ENCODE measurements at regions of chr1 and their contacts with region 1.

Region 1: GRCh38 chr1:193609592-193609991 is 423.2 kb upstream of the B3GALT2 start:
- DNase-seq: no peak
- H3K4me3 Mint-ChIP-seq: no peak overlapping the region
- H3K27ac Mint-ChIP-seq: no peak overlapping the region
- H3K4me1 Mint-ChIP-seq: peaks cover 33% of the 10 kb centered on the region
- H3K27me3 Mint-ChIP-seq: no peaks in the 10 kb centered on the region

Region 2: DNA sequence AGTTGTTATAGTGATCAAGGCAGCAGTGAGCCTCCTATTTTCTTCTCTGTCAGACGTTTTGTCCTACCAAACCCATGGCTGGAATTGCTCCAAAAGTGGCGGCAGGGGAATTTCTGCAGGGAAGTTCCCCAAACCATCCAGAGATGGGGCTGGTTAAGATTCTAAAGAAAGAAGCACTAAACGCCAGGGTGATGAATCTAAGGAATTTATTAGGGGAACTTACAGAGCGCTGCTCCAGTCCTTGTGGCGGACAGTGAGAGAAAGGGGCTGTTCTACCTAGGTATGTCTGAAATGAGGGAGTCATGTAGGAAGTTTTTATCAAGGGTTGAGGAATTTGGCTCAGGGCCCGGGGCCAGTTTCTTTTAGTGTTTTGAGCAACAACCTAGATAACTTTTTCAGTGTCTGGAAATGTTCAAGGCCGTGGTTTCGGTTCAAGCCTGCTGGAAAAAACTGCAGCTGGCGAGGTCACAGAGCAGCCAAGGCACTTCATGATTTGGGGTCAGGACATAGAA is 200.8 kb before region 1 on chr1:
- intact Hi-C with region 1: loop called (anchors 5 kb)
- DNase-seq: no peak
- H3K4me3 Mint-ChIP-seq: no peak overlapping the region
- H3K27ac Mint-ChIP-seq: no peak overlapping the region
- H3K4me1 Mint-ChIP-seq: peaks cover 36% of the 10 kb centered on the region
- H3K27me3 Mint-ChIP-seq: no peaks in the 10 kb centered on the region

Region 3: GRCh38 chr1:193456811-193457280 is 152.7 kb before region 1 on chr1:
- intact Hi-C with region 1: loop called (anchors 10 kb)
- DNase-seq: no peak
- H3K4me3 Mint-ChIP-seq: no peak overlapping the region
- H3K27ac Mint-ChIP-seq: no peak overlapping the region
- H3K4me1 Mint-ChIP-seq: peaks cover 25% of the 10 kb centered on the region
- H3K27me3 Mint-ChIP-seq: no peaks in the 10 kb centered on the region

Region 4: DNA sequence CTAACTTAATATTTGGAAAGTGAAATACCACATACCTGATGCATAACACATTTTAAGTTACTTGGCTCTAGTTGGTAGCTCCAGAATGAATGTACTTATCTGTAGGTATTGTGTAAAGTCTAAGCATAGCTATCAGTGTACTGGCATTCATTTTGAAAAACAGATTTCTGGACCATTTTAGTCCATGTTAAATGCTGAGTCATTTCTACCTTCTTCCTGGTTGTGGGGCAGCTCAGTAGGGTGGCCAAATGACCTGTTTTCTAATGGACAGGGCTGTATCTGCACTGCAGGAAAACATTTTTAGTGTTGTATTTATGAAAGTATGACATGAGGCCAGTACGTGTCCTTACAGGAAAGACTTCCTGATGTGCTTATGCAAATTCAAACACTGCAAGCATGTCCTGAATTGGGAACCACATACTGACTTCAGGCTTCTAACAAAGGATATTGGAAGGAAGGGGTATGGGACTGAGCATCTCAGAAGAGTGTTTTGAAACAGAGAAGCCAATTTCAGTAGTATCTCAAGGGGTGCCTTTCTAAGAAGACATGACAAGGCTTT is 122.8 kb before region 1 on chr1:
- intact Hi-C with region 1: no loop called
- DNase-seq: no peak
- H3K4me3 Mint-ChIP-seq: no peak overlapping the region
- H3K27ac Mint-ChIP-seq: no peak overlapping the region
- H3K4me1 Mint-ChIP-seq: peaks cover 18% of the 10 kb centered on the region
- H3K27me3 Mint-ChIP-seq: no peaks in the 10 kb centered on the region

Region 5: GRCh38 chr1:193569096-193569982 is 40.3 kb before region 1 on chr1:
- intact Hi-C with region 1: loop called (anchors 1 kb)
- DNase-seq: no peak
- H3K4me3 Mint-ChIP-seq: no peak overlapping the region
- H3K27ac Mint-ChIP-seq: peak overlapping the region; percentile 77
- H3K4me1 Mint-ChIP-seq: peaks cover 33% of the 10 kb centered on the region
- H3K27me3 Mint-ChIP-seq: no peaks in the 10 kb centered on the region

Region 6: GRCh38 chr1:193799948-193800690 is 190.5 kb after region 1 on chr1:
- intact Hi-C with region 1: loop called (anchors 5 kb)
- DNase-seq: no peak
- H3K4me3 Mint-ChIP-seq: no peak overlapping the region
- H3K27ac Mint-ChIP-seq: peak overlapping the region; percentile 5
- H3K4me1 Mint-ChIP-seq: peaks cover 13% of the 10 kb centered on the region
- H3K27me3 Mint-ChIP-seq: no peaks in the 10 kb centered on the region